ENCODE measurements at regions of chr14 and their contacts with region 1.

Region 1: DNA sequence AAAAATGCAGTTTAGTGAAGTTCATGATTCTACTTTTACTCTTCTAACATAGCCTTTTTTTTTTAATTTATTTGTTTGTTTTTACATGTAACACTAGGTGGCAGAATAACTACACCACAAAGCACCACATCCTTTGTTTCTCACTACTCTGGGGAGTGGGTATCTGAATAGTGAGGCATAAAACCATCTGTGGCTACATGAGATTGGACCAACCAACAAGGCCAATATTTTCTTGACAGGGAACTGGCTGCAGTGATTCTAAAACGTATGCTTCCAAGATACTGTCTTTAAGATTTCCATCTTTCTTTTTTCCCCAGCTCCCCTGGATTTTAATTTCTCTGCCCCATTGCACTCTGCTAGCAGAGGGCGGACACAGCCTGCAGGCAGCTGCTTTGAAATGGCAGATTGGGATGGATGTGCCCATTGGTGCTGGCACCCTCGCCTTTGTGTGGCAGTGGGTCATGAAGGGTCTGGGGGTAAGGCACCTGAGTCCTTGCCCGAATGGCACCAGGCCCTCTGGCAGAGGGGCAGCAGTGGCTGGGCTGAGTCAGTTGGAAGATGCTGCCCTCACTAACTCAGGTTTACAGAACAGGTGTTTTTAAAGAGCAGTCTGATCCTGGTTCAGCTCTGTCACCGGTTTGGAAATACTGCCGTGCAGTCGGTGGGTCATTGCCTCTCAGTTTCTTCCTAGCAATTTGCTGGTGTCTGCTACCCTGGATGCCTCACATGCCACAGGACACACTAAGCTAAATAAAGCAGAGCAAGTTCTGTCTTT is 429.1 kb downstream of the RAD51B start:
- DNase-seq: peak; percentile 10
- H3K4me3 Mint-ChIP-seq: no peak overlapping the region
- H3K27ac Mint-ChIP-seq: peak overlapping the region; percentile 77
- H3K4me1 Mint-ChIP-seq: peaks cover 70% of the 10 kb centered on the region
- H3K27me3 Mint-ChIP-seq: no peaks in the 10 kb centered on the region
- CTCF ChIP-seq: peak; percentile 42

Region 2: DNA sequence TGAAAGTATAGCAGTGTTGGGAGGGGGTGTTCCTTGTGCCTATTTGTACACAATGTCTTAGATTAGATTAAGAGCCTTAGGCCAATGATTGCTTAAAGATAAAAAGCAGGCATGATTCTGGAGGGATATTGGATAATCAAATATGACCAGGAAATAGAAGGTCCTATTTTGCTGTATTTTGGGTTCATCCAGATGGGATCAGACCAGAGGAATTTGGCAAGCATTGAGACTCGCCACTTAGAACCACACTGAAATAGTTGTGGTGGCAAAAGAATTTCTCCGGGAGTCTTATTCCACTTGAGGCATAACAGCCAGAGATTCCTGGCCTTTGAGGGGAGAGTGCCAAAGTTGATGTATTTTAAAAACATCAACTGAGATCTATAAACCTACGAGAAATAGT is 101.9 kb before region 1 on chr14:
- CTCF ChIA-PET with region 1: no interaction called
- intact Hi-C with region 1: loop called (anchors 5 kb)
- DNase-seq: peak; percentile 35
- H3K4me3 Mint-ChIP-seq: no peak overlapping the region
- H3K27ac Mint-ChIP-seq: peak overlapping the region; percentile 93
- H3K4me1 Mint-ChIP-seq: peaks cover 59% of the 10 kb centered on the region
- H3K27me3 Mint-ChIP-seq: no peaks in the 10 kb centered on the region
- CTCF ChIP-seq: no peak

Region 3: GRCh38 chr14:68458840-68459469 is 210.3 kb after region 1 on chr14:
- CTCF ChIA-PET with region 1: no interaction called
- intact Hi-C with region 1: loop called (anchors 5 kb)
- DNase-seq: peak; percentile 45
- H3K4me3 Mint-ChIP-seq: peak overlapping the region; percentile 40
- H3K27ac Mint-ChIP-seq: peak overlapping the region; percentile 90
- H3K4me1 Mint-ChIP-seq: peaks cover 35% of the 10 kb centered on the region
- H3K27me3 Mint-ChIP-seq: no peaks in the 10 kb centered on the region
- CTCF ChIP-seq: no peak

Region 4: GRCh38 chr14:68577827-68578541 is 329.3 kb after region 1 on chr14:
- CTCF ChIA-PET with region 1: no interaction called
- intact Hi-C with region 1: loop called (anchors 5 kb)
- DNase-seq: peak; percentile 75
- H3K4me3 Mint-ChIP-seq: no peak overlapping the region
- H3K27ac Mint-ChIP-seq: peak overlapping the region; percentile 98
- H3K4me1 Mint-ChIP-seq: peaks cover 45% of the 10 kb centered on the region
- H3K27me3 Mint-ChIP-seq: no peaks in the 10 kb centered on the region
- CTCF ChIP-seq: no peak

Region 5: GRCh38 chr14:68816262-68816942 is 567.7 kb after region 1 on chr14:
- CTCF ChIA-PET with region 1: interaction called, 5 read pairs
- intact Hi-C with region 1: loop called (anchors 1 kb)
- DNase-seq: peak; percentile 90
- H3K4me3 Mint-ChIP-seq: peak overlapping the region; percentile 59
- H3K27ac Mint-ChIP-seq: peak overlapping the region; percentile 87
- H3K4me1 Mint-ChIP-seq: peaks cover 24% of the 10 kb centered on the region
- H3K27me3 Mint-ChIP-seq: no peaks in the 10 kb centered on the region
- CTCF ChIP-seq: peak; percentile 92

Measured in Calu3 (cell line).